IMR-90 (cell line): ENCODE measurements at regions of chr18 and their contacts with region 1.

Region 1: GRCh38 chr18:36481201-36481657 is 183.7 kb downstream of the FHOD3 start:
- DNase-seq: no peak
- ATAC-seq: no peak
- H3K4me3 ChIP-seq: no peak overlapping the region
- H3K27ac ChIP-seq: no peak overlapping the region
- H3K4me1 ChIP-seq: no peaks in the 10 kb centered on the region
- H3K27me3 ChIP-seq: no peaks in the 10 kb centered on the region
- CTCF ChIP-seq: no peak
- POLR2A ChIP-seq: no peak
- RAD21 ChIP-seq: no peak

Region 2: DNA sequence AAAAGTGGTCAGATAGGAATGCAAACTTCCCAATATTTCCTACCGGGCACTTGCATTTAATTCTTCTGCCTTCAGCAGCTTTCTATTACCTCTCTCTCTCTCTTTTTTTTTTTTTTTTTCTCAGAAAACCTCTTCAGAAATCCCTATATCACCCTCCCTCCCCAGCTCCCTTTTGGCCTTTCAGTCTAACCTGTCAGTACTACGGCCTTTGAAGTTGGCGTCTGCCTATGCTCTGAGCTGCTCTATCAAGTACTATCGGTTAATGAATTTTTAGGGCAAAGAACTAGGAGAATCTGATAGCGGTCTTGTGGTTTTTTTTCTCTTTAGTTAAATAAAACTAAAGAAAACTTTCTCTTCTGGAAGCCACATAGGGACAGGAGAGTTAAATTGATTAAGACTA is 1562.4 kb before region 1 on chr18:
- CTCF ChIA-PET with region 1: no interaction called
- POLR2A ChIA-PET with region 1: interaction called, 12 read pairs
- dilution Hi-C with region 1: no loop called
- in situ Hi-C with region 1: no loop called
- intact Hi-C with region 1: no loop called
- DNase-seq: no peak
- ATAC-seq: no peak
- H3K4me3 ChIP-seq: no peak overlapping the region
- H3K27ac ChIP-seq: no peak overlapping the region
- H3K4me1 ChIP-seq: peaks cover 3% of the 10 kb centered on the region; the same call in 1 of the 2 replicates
- H3K27me3 ChIP-seq: no peaks in the 10 kb centered on the region
- CTCF ChIP-seq: no peak
- POLR2A ChIP-seq: no peak
- RAD21 ChIP-seq: no peak

Region 3: DNA sequence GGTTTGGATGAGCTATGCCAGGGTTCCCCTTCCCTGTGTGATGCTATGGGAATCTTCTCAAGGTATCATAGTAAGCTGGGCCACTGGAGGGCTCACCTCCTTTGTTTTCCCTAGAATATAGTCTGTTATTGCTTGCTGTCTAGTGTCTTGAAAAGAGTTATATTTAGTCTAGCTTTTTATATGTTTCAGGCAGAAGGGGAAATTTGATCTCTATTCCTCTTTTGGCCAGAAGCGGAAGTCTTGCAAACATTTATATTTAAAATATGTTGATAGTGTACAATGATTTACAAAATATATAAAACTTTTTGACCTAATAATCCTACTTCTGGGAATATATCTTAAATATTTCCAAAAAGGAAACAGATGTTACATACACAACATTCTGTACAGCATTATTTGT is 77.0 kb after region 1 on chr18:
- CTCF ChIA-PET with region 1: no interaction called
- POLR2A ChIA-PET with region 1: no interaction called
- dilution Hi-C with region 1: no loop called
- in situ Hi-C with region 1: no loop called
- intact Hi-C with region 1: loop called (anchors 10 kb)
- DNase-seq: peak; percentile 44
- ATAC-seq: peak; percentile 76
- H3K4me3 ChIP-seq: no peak overlapping the region
- H3K27ac ChIP-seq: peak overlapping the region; percentile 50; the same call in 1 of the 2 replicates
- H3K4me1 ChIP-seq: peaks cover 10% of the 10 kb centered on the region
- H3K27me3 ChIP-seq: no peaks in the 10 kb centered on the region
- CTCF ChIP-seq: 0 out of 2 replicates have a peak, but pooled peaks have one; percentile 13
- POLR2A ChIP-seq: no peak
- RAD21 ChIP-seq: no peak

Region 4: GRCh38 chr18:37019157-37019827 is 538.1 kb after region 1 on chr18:
- CTCF ChIA-PET with region 1: no interaction called
- POLR2A ChIA-PET with region 1: no interaction called
- dilution Hi-C with region 1: no loop called
- in situ Hi-C with region 1: no loop called
- intact Hi-C with region 1: no loop called
- DNase-seq: peak; percentile 11
- ATAC-seq: peak; percentile 66
- H3K4me3 ChIP-seq: no peak overlapping the region
- H3K27ac ChIP-seq: no peak overlapping the region
- H3K4me1 ChIP-seq: no peaks in the 10 kb centered on the region
- H3K27me3 ChIP-seq: no peaks in the 10 kb centered on the region
- CTCF ChIP-seq: no peak
- POLR2A ChIP-seq: no peak
- RAD21 ChIP-seq: 0 out of 2 replicates have a peak, but pooled peaks have one; percentile 3